ENCODE measurements at regions of chr15 and their contacts with region 1.

Region 1: DNA sequence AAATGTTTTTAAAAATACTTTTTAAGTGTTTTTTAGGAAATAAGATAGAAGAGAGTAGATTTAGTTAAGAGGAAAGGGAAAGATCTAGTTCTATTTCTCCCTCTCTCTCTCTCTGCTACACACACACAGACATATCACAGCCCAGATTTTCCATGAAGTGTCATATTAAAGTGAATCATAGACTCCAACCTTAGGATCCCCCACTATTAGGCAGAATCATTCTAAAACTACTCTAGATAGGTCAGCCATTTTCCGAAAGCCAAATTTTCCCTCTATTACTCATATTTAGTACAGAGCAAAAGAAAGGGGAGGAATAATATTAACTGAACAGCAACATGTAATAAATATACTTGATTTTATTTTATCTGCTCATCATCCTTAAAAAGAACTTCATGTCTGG is 45.1 kb upstream of the RSL24D1 start:
- DNase-seq: no peak
- H3K4me3 Mint-ChIP-seq: peak overlapping the region; percentile 1
- H3K27ac Mint-ChIP-seq: peak overlapping the region; percentile 79
- H3K4me1 Mint-ChIP-seq: peaks cover 86% of the 10 kb centered on the region
- H3K27me3 Mint-ChIP-seq: no peaks in the 10 kb centered on the region

Region 2: DNA sequence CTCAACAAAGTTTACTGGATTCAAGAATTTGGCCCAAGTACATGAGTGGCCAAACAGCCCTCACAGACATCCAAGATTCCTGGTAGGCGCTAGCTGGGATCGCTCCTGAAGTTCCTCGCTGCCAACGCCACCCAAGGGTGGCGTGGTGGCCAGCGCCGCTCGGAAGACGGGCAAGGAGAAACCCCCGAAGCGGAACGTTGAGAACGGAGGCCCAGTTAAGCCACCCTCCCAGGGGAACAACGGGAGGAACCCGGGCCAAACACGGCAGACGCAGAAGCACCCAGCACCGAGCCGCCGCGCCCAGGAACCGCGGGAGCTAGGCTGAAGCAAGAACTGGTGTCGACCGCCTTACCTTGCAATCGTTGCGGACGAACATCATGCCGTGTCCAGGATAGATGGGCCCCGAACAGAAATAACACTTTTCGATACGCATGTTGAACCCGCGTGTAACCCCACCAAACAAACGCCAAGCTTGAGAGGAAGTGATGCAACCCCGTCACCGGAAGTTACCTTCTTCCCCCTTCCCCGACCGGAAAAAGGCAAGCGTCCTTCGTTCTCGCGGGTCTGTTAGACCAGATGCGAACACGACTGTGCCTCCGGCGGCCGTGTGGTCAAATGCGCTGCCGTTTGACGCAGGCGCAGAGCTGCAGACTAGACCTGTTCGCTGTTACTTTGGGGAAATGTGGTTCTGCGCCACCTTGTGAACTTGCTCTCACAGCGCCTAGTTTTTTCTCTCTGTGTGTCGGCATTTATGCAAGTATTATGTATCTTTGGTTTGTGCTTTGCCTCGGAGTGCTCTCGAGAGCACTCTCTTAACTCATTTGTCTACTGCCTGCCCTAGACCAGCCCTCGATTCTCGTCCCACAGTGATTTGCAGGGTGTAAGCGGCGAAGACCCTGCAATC is 45.2 kb before region 1 on chr15 and contains the start of gene RSL24D1:
- CTCF ChIA-PET with region 1: interaction called, 3 read pairs
- POLR2A ChIA-PET with region 1: interaction called, 11 read pairs
- intact Hi-C with region 1: loop called (anchors 2 kb)
- DNase-seq: peak; percentile 98
- H3K4me3 Mint-ChIP-seq: no peak within 1 kb of the TSS
- H3K27ac Mint-ChIP-seq: no peak within 1 kb of the TSS
- H3K4me1 Mint-ChIP-seq: peaks cover 22% of the 10 kb centered on the region
- H3K27me3 Mint-ChIP-seq: no peaks in the 10 kb centered on the region
- total RNA-seq, gene RSL24D1: 157 to 163 TPM

Region 3: GRCh38 chr15:55221090-55222011 is 20.5 kb before region 1 on chr15:
- CTCF ChIA-PET with region 1: interaction called, 6 read pairs
- POLR2A ChIA-PET with region 1: interaction called, 18 read pairs
- intact Hi-C with region 1: loop called (anchors 1 kb)
- DNase-seq: peak; percentile 72
- H3K4me3 Mint-ChIP-seq: peak overlapping the region; percentile 47
- H3K27ac Mint-ChIP-seq: peak overlapping the region; percentile 91
- H3K4me1 Mint-ChIP-seq: peaks cover 76% of the 10 kb centered on the region
- H3K27me3 Mint-ChIP-seq: no peaks in the 10 kb centered on the region

Region 4: DNA sequence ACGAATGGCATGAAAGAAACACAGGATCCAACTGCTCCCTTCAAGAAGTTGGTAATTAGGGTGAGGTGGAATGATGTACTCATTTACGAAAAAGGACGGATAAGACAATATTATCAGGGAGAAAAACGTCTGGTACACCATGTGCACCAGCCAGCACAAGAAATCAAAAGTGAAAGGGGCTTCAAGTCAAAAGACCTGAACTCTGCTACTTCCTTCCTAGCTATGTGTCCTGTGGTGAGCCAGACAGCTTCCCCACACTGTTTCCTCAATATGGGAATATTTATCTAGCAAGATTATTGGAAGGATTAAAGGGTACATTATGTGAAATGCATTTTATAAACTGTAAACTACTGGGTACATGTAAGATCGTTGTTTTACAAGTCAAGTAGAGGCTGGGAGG is 13.8 kb after region 1 on chr15:
- CTCF ChIA-PET with region 1: interaction called, 9 read pairs
- POLR2A ChIA-PET with region 1: interaction called, 9 read pairs
- intact Hi-C with region 1: loop called (anchors 1 kb)
- DNase-seq: no peak
- H3K4me3 Mint-ChIP-seq: peak overlapping the region; percentile 62
- H3K27ac Mint-ChIP-seq: peak overlapping the region; percentile 85
- H3K4me1 Mint-ChIP-seq: peaks cover 77% of the 10 kb centered on the region
- H3K27me3 Mint-ChIP-seq: no peaks in the 10 kb centered on the region

Region 5: GRCh38 chr15:55279746-55280351 is 38.0 kb after region 1 on chr15:
- CTCF ChIA-PET with region 1: interaction called, 17 read pairs
- POLR2A ChIA-PET with region 1: interaction called, 33 read pairs
- intact Hi-C with region 1: loop called (anchors 1 kb)
- DNase-seq: peak; percentile 78
- H3K4me3 Mint-ChIP-seq: peak overlapping the region; percentile 34
- H3K27ac Mint-ChIP-seq: peak overlapping the region; percentile 98
- H3K4me1 Mint-ChIP-seq: peaks cover 93% of the 10 kb centered on the region
- H3K27me3 Mint-ChIP-seq: no peaks in the 10 kb centered on the region

Measured in activated CD4-positive, alpha-beta memory T cell treated with anti-CD3 and anti-CD28 coated beads for 36 hours (primary cell).